ENCODE measurements at regions of chr17 and their contacts with region 1.

Region 1: GRCh38 chr17:58006924-58007780 is at the start of gene SRSF1:
- DNase-seq: peak; percentile 95 to 99 (median 98)
- ATAC-seq: peak; percentile 92
- H3K4me3 ChIP-seq: peak within 1 kb of the TSS; percentile 99
- H3K4me3 Mint-ChIP-seq: peak within 1 kb of the TSS; percentile 96 to 100 (median 99)
- H3K27ac ChIP-seq: peak within 1 kb of the TSS; percentile 93
- H3K27ac Mint-ChIP-seq: peak within 1 kb of the TSS; percentile 99 to 100 (median 99)
- H3K4me1 ChIP-seq: peaks cover 31 to 32% of the 10 kb centered on the region in 2 donors
- H3K4me1 Mint-ChIP-seq: peaks cover 33 to 60% (median 54%) of the 10 kb centered on the region in 7 donors
- H3K27me3 ChIP-seq: no peaks in the 10 kb centered on the region
- H3K27me3 Mint-ChIP-seq: peaks cover 0 to 3% (median 0%) of the 10 kb centered on the region in 5 donors
- total RNA-seq, gene SRSF1: 115 to 362 (median 249) TPM

Region 2: DNA sequence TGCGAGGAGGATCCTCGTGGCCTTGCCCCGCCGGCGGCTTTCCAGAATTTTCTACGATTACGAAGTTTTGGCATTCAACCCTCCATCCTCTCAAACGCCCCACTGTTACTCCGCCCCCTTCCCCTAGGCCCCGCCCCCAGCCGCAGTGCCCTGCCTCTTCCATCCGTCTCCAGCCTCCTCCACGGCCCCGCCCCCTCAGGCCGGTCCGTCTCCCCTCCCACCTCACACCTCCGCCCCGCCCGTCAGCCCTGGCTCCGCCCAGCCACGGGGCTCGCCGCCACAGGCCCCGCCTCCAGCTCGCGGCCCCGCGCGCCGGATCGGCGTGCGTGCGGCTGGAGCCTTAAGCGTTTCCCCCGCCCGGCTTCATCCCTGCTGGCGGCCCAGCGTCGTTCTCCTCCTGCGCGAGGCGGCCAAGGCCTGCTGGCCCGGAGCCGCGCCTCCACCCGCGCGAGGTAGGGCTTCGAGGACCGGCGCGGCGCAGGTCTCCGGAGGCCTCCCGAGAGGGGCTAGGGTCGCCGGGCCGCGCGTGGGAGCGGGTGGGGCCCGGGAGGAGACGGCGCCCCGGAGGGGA is 1173.3 kb before region 1 on chr17 and contains the starts of genes C17orf67 and DGKE:
- CTCF ChIA-PET with region 1: no interaction called
- POLR2A ChIA-PET with region 1: no interaction called
- intact Hi-C with region 1: loop called (anchors 1 to 10 kb)
- DNase-seq: peak; percentile 95 to 100 (median 98)
- ATAC-seq: peak; percentile 97
- H3K4me3 ChIP-seq: peak within 1 kb of the TSS; percentile 91
- H3K4me3 Mint-ChIP-seq: peak within 1 kb of the TSS; percentile 91 to 98 (median 95)
- H3K27ac ChIP-seq: peak within 1 kb of the TSS; percentile 85
- H3K27ac Mint-ChIP-seq: peak within 1 kb of the TSS; percentile 83 to 95 (median 93)
- H3K4me1 ChIP-seq: peaks cover 41 to 42% of the 10 kb centered on the region in 2 donors
- H3K4me1 Mint-ChIP-seq: peaks cover 34 to 74% (median 62%) of the 10 kb centered on the region in 7 donors
- H3K27me3 ChIP-seq: no peaks in the 10 kb centered on the region
- H3K27me3 Mint-ChIP-seq: no peaks in the 10 kb centered on the region
- total RNA-seq, gene C17orf67: 3.6 to 9.1 (median 5.4) TPM
- total RNA-seq, gene DGKE: 23.7 to 39.2 (median 35.6) TPM

Region 3: GRCh38 chr17:57671667-57672632 is 335.2 kb before region 1 on chr17:
- CTCF ChIA-PET with region 1: no interaction called
- POLR2A ChIA-PET with region 1: no interaction called
- intact Hi-C with region 1: no loop called
- DNase-seq: peak; percentile 47 to 73 (median 61)
- ATAC-seq: peak; percentile 92
- H3K4me3 ChIP-seq: peak overlapping the region; percentile 31
- H3K4me3 Mint-ChIP-seq: peak overlapping the region in 5 of 10 donors; percentile 10 to 61 (median 29)
- H3K27ac ChIP-seq: no peak overlapping the region
- H3K27ac Mint-ChIP-seq: peak overlapping the region; percentile 10 to 84 (median 74)
- H3K4me1 ChIP-seq: peaks cover 6 to 29% of the 10 kb centered on the region in 2 donors
- H3K4me1 Mint-ChIP-seq: peaks cover 0 to 26% (median 14%) of the 10 kb centered on the region in 7 donors
- H3K27me3 ChIP-seq: no peaks in the 10 kb centered on the region
- H3K27me3 Mint-ChIP-seq: no peaks in the 10 kb centered on the region

Region 4: GRCh38 chr17:57965521-57966160 is 41.5 kb before region 1 on chr17:
- CTCF ChIA-PET with region 1: no interaction called
- POLR2A ChIA-PET with region 1: no interaction called
- intact Hi-C with region 1: no loop called
- DNase-seq: no peak
- ATAC-seq: no peak
- H3K4me3 ChIP-seq: no peak overlapping the region
- H3K4me3 Mint-ChIP-seq: no peak overlapping the region
- H3K27ac ChIP-seq: no peak overlapping the region
- H3K27ac Mint-ChIP-seq: no peak overlapping the region
- H3K4me1 ChIP-seq: no peaks in the 10 kb centered on the region
- H3K4me1 Mint-ChIP-seq: no peaks in the 10 kb centered on the region
- H3K27me3 ChIP-seq: no peaks in the 10 kb centered on the region
- H3K27me3 Mint-ChIP-seq: peaks cover 0 to 19% (median 0%) of the 10 kb centered on the region in 5 donors

Region 5: GRCh38 chr17:57987580-57988421 is 19.4 kb before region 1 on chr17 and contains the start of gene VEZF1:
- CTCF ChIA-PET with region 1: interaction called, 45 read pairs
- POLR2A ChIA-PET with region 1: interaction called, 113 read pairs
- intact Hi-C with region 1: loop called (anchors 1 kb)
- DNase-seq: peak; percentile 66 to 85 (median 75)
- ATAC-seq: peak; percentile 84
- H3K4me3 ChIP-seq: peak within 1 kb of the TSS; percentile 94
- H3K4me3 Mint-ChIP-seq: peak within 1 kb of the TSS; percentile 92 to 96 (median 95)
- H3K27ac ChIP-seq: peak within 1 kb of the TSS; percentile 87
- H3K27ac Mint-ChIP-seq: peak within 1 kb of the TSS; percentile 90 to 98 (median 95)
- H3K4me1 ChIP-seq: peaks cover 39 to 45% of the 10 kb centered on the region in 2 donors
- H3K4me1 Mint-ChIP-seq: peaks cover 45 to 81% (median 75%) of the 10 kb centered on the region in 7 donors
- H3K27me3 ChIP-seq: no peaks in the 10 kb centered on the region
- H3K27me3 Mint-ChIP-seq: no peaks in the 10 kb centered on the region
- total RNA-seq, gene VEZF1: 43.2 to 81.9 (median 46.3) TPM

Region 6: GRCh38 chr17:58082870-58083490 is 75.8 kb after region 1 on chr17 and contains the start of gene DYNLL2:
- CTCF ChIA-PET with region 1: interaction called, 5 read pairs
- POLR2A ChIA-PET with region 1: interaction called, 41 read pairs
- intact Hi-C with region 1: loop called (anchors 1 kb)
- DNase-seq: peak; percentile 74 to 88 (median 87)
- ATAC-seq: peak; percentile 91
- H3K4me3 ChIP-seq: peak within 1 kb of the TSS; percentile 88
- H3K4me3 Mint-ChIP-seq: peak within 1 kb of the TSS; percentile 88 to 95 (median 92)
- H3K27ac ChIP-seq: peak within 1 kb of the TSS; percentile 94
- H3K27ac Mint-ChIP-seq: peak within 1 kb of the TSS; percentile 81 to 95 (median 90)
- H3K4me1 ChIP-seq: peaks cover 23 to 34% of the 10 kb centered on the region in 2 donors
- H3K4me1 Mint-ChIP-seq: peaks cover 26 to 40% (median 34%) of the 10 kb centered on the region in 7 donors
- H3K27me3 ChIP-seq: no peaks in the 10 kb centered on the region
- H3K27me3 Mint-ChIP-seq: peaks cover 0 to 31% (median 0%) of the 10 kb centered on the region in 5 donors
- total RNA-seq, gene DYNLL2: 30.1 to 39.1 (median 35.1) TPM

Region 7: DNA sequence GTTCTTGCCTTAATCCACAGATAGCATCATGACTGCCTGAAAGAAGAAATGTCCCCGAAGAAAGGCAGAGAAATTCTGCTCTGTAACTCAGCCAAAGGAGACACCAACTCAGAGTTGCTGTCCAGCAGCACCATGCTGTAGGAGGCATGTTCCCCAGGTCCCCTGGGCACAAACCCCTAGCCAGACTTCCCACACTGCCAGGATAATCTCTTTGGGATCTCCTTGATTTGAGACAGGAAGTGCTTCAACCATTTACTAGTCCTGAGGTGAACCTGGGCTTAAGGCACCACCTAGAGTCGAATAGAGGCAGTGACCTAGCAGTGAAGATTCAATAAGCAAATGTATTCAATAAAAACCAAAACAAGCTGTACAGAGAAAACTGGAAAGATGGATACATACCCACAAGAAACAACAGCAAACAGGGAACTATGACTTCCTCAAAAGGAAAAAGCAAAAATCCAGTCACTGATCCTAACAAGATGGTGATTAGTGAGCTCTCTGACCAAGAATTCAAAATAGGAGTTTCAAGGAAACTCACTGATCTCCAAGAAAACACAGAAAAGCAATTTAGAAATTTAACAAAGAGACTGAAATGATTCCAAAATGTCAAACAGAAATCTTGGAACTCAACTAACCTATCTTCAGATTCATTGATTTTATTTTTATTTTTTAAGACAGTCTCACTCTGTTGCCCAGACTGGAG is 165.4 kb after region 1 on chr17:
- CTCF ChIA-PET with region 1: no interaction called
- POLR2A ChIA-PET with region 1: no interaction called
- intact Hi-C with region 1: loop called (anchors 2 kb)
- DNase-seq: peak in 7 of 9 donors; percentile 42 to 69 (median 61)
- ATAC-seq: peak; percentile 80
- H3K4me3 ChIP-seq: no peak overlapping the region
- H3K4me3 Mint-ChIP-seq: peak overlapping the region in 9 of 10 donors; percentile 8 to 71 (median 35)
- H3K27ac ChIP-seq: no peak overlapping the region
- H3K27ac Mint-ChIP-seq: peak overlapping the region in 8 of 9 donors; percentile 2 to 96 (median 74)
- H3K4me1 ChIP-seq: peaks cover 38 to 39% of the 10 kb centered on the region in 2 donors
- H3K4me1 Mint-ChIP-seq: peaks cover 31 to 49% (median 48%) of the 10 kb centered on the region in 7 donors
- H3K27me3 ChIP-seq: no peaks in the 10 kb centered on the region
- H3K27me3 Mint-ChIP-seq: peaks cover 0 to 20% (median 2%) of the 10 kb centered on the region in 5 donors

Region 8: GRCh38 chr17:58329035-58329809 is 322.1 kb after region 1 on chr17:
- CTCF ChIA-PET with region 1: no interaction called
- POLR2A ChIA-PET with region 1: no interaction called
- intact Hi-C with region 1: loop called in 1 of 2 experiments (anchors 2 kb)
- DNase-seq: peak in 8 of 9 donors; percentile 52 to 83 (median 62)
- ATAC-seq: peak; percentile 62
- H3K4me3 ChIP-seq: peak overlapping the region; percentile 64
- H3K4me3 Mint-ChIP-seq: peak overlapping the region; percentile 86 to 100 (median 94)
- H3K27ac ChIP-seq: peak overlapping the region; percentile 98
- H3K27ac Mint-ChIP-seq: peak overlapping the region; percentile 91 to 98 (median 94)
- H3K4me1 ChIP-seq: peaks cover 4 to 18% of the 10 kb centered on the region in 2 donors
- H3K4me1 Mint-ChIP-seq: peaks cover 37 to 61% (median 50%) of the 10 kb centered on the region in 7 donors
- H3K27me3 ChIP-seq: no peaks in the 10 kb centered on the region
- H3K27me3 Mint-ChIP-seq: peaks cover 0 to 19% (median 0%) of the 10 kb centered on the region in 5 donors

Region 9: GRCh38 chr17:58352014-58352842 is 345.1 kb after region 1 on chr17 and contains the start of gene SUPT4H1:
- CTCF ChIA-PET with region 1: no interaction called
- POLR2A ChIA-PET with region 1: no interaction called
- intact Hi-C with region 1: loop called in 1 of 2 experiments (anchors 1 kb)
- DNase-seq: peak; percentile 83 to 93 (median 92)
- ATAC-seq: peak; percentile 98
- H3K4me3 ChIP-seq: peak within 1 kb of the TSS; percentile 95
- H3K4me3 Mint-ChIP-seq: peak within 1 kb of the TSS; percentile 97 to 100 (median 99)
- H3K27ac ChIP-seq: peak within 1 kb of the TSS; percentile 85
- H3K27ac Mint-ChIP-seq: peak within 1 kb of the TSS; percentile 93 to 99 (median 98)
- H3K4me1 ChIP-seq: peaks cover 16 to 31% of the 10 kb centered on the region in 2 donors
- H3K4me1 Mint-ChIP-seq: peaks cover 38 to 73% (median 66%) of the 10 kb centered on the region in 7 donors
- H3K27me3 ChIP-seq: no peaks in the 10 kb centered on the region
- H3K27me3 Mint-ChIP-seq: no peaks in the 10 kb centered on the region
- total RNA-seq, gene SUPT4H1: 36.0 to 75.6 (median 62.3) TPM

Region 10: GRCh38 chr17:59004338-59005111 is 997.4 kb after region 1 on chr17:
- CTCF ChIA-PET with region 1: no interaction called
- POLR2A ChIA-PET with region 1: no interaction called
- intact Hi-C with region 1: no loop called
- DNase-seq: peak; percentile 17 to 73 (median 60)
- ATAC-seq: peak; percentile 73
- H3K4me3 ChIP-seq: no peak overlapping the region
- H3K4me3 Mint-ChIP-seq: peak overlapping the region in 2 of 10 donors; percentile 9 to 12
- H3K27ac ChIP-seq: no peak overlapping the region
- H3K27ac Mint-ChIP-seq: peak overlapping the region; percentile 50 to 86 (median 84)
- H3K4me1 ChIP-seq: peaks cover 5 to 6% of the 10 kb centered on the region in 2 donors
- H3K4me1 Mint-ChIP-seq: peaks cover 5 to 32% (median 20%) of the 10 kb centered on the region in 7 donors
- H3K27me3 ChIP-seq: no peaks in the 10 kb centered on the region
- H3K27me3 Mint-ChIP-seq: no peaks in the 10 kb centered on the region